HCT116 (cell line): ENCODE measurements at regions of chr7 and their contacts with region 1.

Region 1: GRCh38 chr7:108459931-108460551 is 3.8 kb upstream of the NRCAM start:
- DNase-seq: peak; percentile 4
- ATAC-seq: peak; percentile 86
- H3K4me3 ChIP-seq: no peak overlapping the region
- H3K27ac ChIP-seq: no peak overlapping the region
- H3K4me1 ChIP-seq: no peaks in the 10 kb centered on the region
- H3K27me3 ChIP-seq: 0 out of 2 replicates have a peak, but pooled peaks cover 5% of the 10 kb centered on the region
- CTCF ChIP-seq: peak; percentile 50 to 54 (median 51); a peak in 5 of 6 replicates
- POLR2A ChIP-seq: no peak
- RAD21 ChIP-seq: peak; percentile 69

Region 2: GRCh38 chr7:108181073-108181985 is 278.7 kb before region 1 on chr7:
- CTCF ChIA-PET with region 1: interaction called, 3 read pairs
- POLR2A ChIA-PET with region 1: no interaction called
- RAD21 ChIA-PET with region 1: no interaction called
- intact Hi-C with region 1: loop called (anchors 1 kb)
- DNase-seq: peak; percentile 51
- ATAC-seq: peak; percentile 67
- H3K4me3 ChIP-seq: no peak overlapping the region
- H3K27ac ChIP-seq: no peak overlapping the region
- H3K4me1 ChIP-seq: no peaks in the 10 kb centered on the region
- H3K27me3 ChIP-seq: no peaks in the 10 kb centered on the region
- CTCF ChIP-seq: peak; percentile 59 to 77 (median 65); a peak in 5 of 6 replicates
- POLR2A ChIP-seq: no peak
- RAD21 ChIP-seq: peak; percentile 80

Region 3: DNA sequence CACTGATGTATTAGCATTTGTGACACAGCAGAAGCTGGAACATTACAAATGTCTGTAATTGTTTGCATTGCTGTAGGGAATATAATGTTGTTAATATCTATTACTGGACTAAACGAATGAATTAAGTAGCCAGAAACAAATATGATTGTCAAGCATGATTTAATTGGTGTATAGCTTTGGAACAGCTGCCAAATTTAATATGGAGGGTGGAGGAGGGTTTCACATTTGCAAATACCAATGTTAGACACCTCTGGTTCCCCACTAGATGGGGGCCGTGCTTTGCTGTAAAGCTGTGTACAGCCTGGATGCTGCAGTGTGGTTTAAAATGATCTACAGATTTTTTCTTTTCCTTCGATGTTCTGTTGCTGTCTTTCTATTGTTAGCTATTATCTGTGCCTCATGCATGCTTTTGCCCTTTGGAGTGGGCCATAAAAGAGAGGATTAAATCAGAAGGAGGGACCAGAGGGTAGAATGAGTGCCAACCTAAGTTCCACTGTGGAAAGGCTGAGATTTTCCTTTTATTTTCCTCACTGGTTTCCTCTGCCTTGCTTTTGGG is 132.7 kb after region 1 on chr7:
- CTCF ChIA-PET with region 1: no interaction called
- POLR2A ChIA-PET with region 1: no interaction called
- RAD21 ChIA-PET with region 1: no interaction called
- intact Hi-C with region 1: no loop called
- DNase-seq: no peak
- ATAC-seq: peak; percentile 57
- H3K4me3 ChIP-seq: no peak overlapping the region
- H3K27ac ChIP-seq: no peak overlapping the region
- H3K4me1 ChIP-seq: no peaks in the 10 kb centered on the region
- H3K27me3 ChIP-seq: no peaks in the 10 kb centered on the region
- CTCF ChIP-seq: peak in 1 of 3 experiments; percentile 24; a peak in 1 of 6 replicates
- POLR2A ChIP-seq: no peak
- RAD21 ChIP-seq: peak; percentile 40